ENCODE measurements at regions of chr18 and their contacts with region 1.

Region 1: GRCh38 chr18:50287441-50288347 is at the start of gene CXXC1:
- DNase-seq: peak; percentile 98
- H3K4me3 ChIP-seq: peak within 1 kb of the TSS; percentile 66 to 81
- H3K27ac ChIP-seq: peak within 1 kb of the TSS; percentile 81 to 89
- H3K4me1 ChIP-seq: no peaks in the 10 kb centered on the region
- H3K27me3 ChIP-seq: no peaks in the 10 kb centered on the region
- CTCF ChIP-seq: peak in 2 of 4 experiments; percentile 77 to 85
- POLR2A ChIP-seq: peak; percentile 31
- total RNA-seq, gene CXXC1: 61.9 to 87.4 TPM

Region 2: DNA sequence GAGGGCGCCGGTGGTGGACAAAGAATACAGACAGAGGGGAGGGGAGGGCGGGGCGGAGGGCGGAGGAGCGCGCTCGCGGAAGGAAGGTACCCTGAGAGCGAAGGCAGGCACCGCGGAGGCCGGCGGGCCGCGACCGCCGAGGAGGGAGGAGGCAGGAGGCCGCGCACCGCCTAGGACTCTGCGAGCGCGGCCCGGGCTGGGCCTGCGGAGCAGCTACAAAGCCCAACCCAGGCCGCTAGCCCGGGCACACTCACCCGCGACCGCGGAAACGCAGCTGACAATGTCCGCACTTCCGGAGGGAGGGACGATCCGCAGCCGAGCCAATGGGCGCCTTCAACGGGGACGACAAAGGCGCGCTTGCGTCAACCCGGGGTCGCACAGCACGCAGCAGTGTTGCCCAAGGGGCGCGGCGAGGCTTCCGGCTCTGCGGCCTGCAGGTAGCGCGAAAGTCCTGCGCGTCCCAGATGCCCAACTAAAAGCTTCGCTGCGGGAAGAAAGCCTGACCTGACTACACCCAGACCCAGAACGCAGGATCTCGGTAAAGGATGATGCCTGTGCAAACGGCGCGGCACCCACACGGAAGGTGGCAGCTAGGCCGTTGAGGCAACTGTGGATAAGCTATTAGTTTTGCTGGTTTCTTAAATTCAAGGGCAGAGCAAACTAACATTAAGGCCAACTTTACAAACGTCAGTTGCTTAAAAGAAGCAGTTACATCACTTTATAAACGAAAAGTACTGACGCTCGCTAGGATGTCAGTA is 800.6 kb before region 1 on chr18 and contains the start of gene C18orf32:
- intact Hi-C with region 1: loop called (anchors 10 kb)
- DNase-seq: peak; percentile 90
- H3K4me3 ChIP-seq: peak within 1 kb of the TSS; percentile 74 to 82
- H3K27ac ChIP-seq: peak within 1 kb of the TSS; percentile 94 to 95
- H3K4me1 ChIP-seq: peaks cover 4% of the 10 kb centered on the region
- H3K27me3 ChIP-seq: no peaks in the 10 kb centered on the region
- CTCF ChIP-seq: no peak
- POLR2A ChIP-seq: peak; percentile 91
- total RNA-seq, gene C18orf32: 37.1 to 56.6 TPM

Region 3: DNA sequence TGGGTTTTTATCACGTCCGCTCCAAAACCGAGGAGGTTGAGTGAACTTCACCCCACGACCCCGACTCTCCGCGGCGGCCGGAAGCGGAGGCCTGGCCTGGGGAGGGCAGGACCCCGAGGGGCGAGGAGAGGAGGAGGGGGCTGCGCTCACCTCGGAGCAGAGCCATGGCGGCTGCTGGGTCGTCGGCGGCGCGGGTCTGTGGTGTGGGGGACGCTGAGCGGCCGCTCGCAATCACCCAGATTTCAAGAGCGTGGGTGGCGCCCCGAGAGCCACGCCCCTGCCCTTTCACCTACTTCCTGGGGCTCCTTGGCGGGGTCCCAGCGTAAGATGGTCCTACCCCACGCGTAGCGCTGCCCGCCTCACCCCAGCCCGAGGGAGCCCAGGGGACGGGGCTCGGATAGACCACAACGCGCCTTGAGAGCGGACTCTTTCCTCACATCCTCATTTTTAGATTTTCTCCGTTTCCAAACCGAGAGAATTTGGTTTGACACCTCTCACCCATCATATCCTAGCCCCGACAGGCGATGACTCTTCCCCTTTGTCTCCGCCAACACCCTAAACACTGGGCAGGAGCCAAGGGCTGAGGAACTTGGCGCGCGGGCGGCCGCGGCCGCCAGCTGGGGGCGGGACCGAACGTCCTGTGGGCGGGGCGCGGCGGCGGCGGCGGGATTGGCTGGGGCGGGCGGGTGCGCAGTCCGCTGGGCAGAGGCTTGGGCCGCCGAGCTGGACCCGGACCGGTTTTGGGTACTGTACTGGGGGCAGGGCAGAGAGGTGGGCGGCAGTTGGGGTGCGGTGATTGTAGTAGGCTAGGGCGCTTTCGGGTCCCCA is 474.2 kb before region 1 on chr18 and contains the start of gene ACAA2:
- intact Hi-C with region 1: loop called (anchors 10 kb)
- DNase-seq: peak; percentile 81
- H3K4me3 ChIP-seq: peak within 1 kb of the TSS; percentile 72 to 73
- H3K27ac ChIP-seq: peak within 1 kb of the TSS; percentile 85 to 89
- H3K4me1 ChIP-seq: peaks cover 2% of the 10 kb centered on the region
- H3K27me3 ChIP-seq: no peaks in the 10 kb centered on the region
- CTCF ChIP-seq: peak in 1 of 4 experiments; percentile 13
- POLR2A ChIP-seq: peak; percentile 66
- total RNA-seq, gene ACAA2: 19.9 to 37.0 TPM

Region 4: GRCh38 chr18:50878345-50879301 is 590.9 kb after region 1 on chr18 and contains the start of gene ME2:
- intact Hi-C with region 1: loop called (anchors 10 kb)
- DNase-seq: peak; percentile 91
- H3K4me3 ChIP-seq: peak within 1 kb of the TSS; percentile 78 to 89
- H3K27ac ChIP-seq: peak within 1 kb of the TSS; percentile 91 to 92
- H3K4me1 ChIP-seq: no peaks in the 10 kb centered on the region
- H3K27me3 ChIP-seq: no peaks in the 10 kb centered on the region
- CTCF ChIP-seq: no peak
- POLR2A ChIP-seq: peak; percentile 94
- total RNA-seq, gene ME2: 38.3 to 59.4 TPM

Measured in prostate gland (tissue), 2 donors.